Left ventricle myocardium inferior (tissue), 1 donor: ENCODE measurements at regions of chr7 and their contacts with region 1.

Region 1: DNA sequence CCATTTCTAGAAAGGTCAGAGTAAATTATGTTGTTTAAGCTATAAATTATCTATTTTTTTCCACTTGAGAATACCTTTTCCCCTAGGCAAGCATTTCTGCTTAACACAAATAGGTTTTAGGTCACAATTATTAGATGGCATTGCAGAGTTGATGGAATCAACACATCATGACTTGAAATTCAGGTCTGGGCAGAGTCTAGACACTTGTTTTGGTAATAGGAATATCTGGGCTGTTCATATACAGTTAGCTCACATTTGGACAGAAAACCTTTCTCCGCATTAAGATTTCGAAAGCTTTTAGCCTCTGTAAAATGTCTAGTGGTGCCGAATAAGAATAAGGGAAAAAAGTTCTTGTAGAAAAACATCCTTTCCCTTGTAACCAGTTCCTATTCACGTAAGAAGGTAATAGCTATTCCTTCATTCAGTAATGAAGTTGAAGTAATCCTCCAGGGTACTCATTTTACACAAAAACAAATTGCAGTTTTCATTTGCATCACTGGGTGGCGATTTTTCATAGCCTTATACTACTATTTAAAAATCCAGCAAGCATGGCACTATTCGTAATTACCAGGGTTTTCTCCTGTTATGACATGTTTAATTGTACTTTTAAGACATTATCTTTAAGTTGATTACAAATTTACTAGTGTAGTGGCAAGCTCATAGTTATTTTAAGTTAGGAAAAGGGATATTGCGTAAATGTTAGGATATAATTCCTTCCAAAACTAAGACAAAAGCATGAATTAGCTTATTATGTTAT is 37.0 kb downstream of the RPA3 start:
- DNase-seq: no peak
- H3K4me3 ChIP-seq: peak overlapping the region; percentile 25
- H3K27ac ChIP-seq: peak overlapping the region; percentile 60
- H3K4me1 ChIP-seq: peaks cover 32% of the 10 kb centered on the region
- H3K27me3 ChIP-seq: no peaks in the 10 kb centered on the region
- CTCF ChIP-seq: peak; percentile 78

Region 2: DNA sequence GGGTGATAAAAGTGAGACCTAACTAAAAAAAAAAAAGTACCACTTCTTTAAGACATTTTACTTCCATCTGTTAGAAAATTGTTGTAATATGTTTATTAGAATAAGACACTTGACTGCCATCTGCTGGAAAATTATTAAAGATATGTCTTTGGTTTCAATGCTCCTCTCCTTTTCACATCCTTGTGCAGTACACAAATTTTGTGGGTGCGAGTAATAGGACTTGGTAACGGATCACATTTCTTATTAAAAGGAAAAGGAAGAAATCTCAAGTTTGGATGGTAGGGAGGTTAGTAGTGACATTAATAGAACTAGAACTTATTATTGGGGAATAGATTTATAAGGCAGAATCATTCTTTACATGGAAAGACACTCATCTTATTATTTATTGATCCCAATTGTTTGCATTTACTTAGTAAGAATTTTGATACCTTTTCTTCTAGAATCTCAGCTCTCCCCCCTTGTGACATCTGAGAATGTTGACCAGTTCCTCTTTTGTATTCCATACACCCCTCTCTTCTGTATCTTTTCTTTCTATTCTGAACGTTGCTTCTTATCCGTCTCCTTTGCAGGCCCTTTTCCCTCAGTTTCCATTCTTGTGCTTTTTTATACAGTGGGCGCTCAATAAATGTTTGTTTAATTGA is 80.1 kb after region 1 on chr7:
- intact Hi-C with region 1: loop called (anchors 2 kb)
- DNase-seq: no peak
- H3K4me3 ChIP-seq: peak overlapping the region; percentile 62
- H3K27ac ChIP-seq: peak overlapping the region; percentile 76
- H3K4me1 ChIP-seq: peaks cover 17% of the 10 kb centered on the region
- H3K27me3 ChIP-seq: no peaks in the 10 kb centered on the region
- CTCF ChIP-seq: peak; percentile 73

Region 3: DNA sequence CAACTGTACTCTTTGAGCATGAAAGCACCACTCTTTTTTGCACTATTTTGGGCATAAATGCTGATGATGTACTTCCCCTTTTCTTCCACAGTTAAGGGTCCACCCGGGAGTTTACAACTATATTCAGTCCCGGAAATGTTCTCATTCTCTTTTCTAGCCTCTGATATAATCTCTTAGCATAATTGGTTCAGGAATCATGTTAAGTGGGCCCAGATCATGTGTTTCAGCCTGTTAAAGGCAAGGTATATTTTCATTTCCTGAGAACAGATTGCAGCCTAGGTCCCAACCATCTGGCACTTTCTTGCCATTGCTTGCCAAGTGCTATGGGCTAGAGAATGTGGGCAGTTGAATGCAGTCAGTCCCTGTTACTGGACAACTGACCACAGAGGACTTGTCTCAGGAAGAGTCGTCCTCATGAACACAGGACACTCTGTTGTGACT is 175.8 kb after region 1 on chr7:
- intact Hi-C with region 1: no loop called
- DNase-seq: no peak
- H3K4me3 ChIP-seq: no peak overlapping the region
- H3K27ac ChIP-seq: no peak overlapping the region
- H3K4me1 ChIP-seq: peaks cover 26% of the 10 kb centered on the region
- H3K27me3 ChIP-seq: no peaks in the 10 kb centered on the region
- CTCF ChIP-seq: no peak